KBM-7 (cell line): ENCODE measurements at regions of chr1 and their contacts with region 1.

Region 1: DNA sequence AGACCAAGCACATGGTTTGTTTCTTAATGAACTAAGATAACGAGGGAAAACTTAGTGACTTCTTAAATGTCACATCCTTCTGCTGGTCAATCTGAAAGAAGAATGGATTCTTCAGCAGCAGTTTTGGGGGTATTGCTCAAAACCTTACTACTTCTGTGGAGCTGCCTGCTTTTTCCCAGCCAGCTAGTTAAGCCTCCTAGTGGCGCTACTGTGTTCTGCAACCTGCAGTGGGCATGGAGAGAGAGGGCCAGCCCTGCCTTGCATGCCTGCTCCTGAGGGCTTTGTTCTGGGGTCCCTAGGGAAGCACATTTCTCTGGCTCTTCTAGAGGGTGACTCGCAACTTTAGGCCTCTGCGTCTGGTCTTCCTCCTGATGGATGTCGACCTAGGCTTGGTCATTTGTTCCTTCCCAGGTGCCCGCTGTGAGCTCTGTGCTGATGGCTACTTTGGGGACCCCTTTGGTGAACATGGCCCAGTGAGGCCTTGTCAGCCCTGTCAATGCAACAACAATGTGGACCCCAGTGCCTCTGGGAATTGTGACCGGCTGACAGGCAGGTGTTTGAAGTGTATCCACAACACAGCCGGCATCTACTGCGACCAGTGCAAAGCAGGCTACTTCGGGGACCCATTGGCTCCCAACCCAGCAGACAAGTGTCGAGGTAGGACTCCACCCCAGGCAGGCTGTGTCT is 42.0 kb downstream of the LAMC2 start:
- DNase-seq: peak; percentile 51

Region 2: DNA sequence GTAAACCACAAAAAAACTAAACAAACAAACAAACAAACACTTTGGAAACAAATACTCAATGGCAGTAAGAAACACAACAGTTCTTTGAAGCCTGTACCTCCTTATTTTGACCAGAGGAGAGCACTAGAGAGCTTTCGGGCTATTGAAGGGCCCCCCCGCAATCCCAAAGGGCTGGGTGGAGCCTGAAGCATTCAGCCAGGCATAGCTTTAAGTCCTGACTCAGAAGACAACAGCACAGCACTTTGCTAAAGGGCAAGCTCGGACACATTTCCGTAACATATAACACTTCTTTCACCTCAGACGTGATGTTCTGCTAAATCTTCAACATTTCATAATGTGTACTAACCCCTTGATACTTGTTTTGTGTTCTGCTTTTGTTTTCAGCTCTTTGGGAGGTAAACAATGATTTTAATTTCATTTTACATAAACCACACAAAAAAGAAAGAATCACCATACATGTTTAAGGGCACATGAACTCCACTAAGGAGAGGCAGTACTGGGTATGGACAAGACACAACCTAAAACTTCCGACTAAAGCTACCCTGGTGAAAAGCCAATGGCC is 265.5 kb before region 1 on chr1:
- in situ Hi-C with region 1: loop called (anchors 25 kb)
- DNase-seq: peak; percentile 73

Region 3: DNA sequence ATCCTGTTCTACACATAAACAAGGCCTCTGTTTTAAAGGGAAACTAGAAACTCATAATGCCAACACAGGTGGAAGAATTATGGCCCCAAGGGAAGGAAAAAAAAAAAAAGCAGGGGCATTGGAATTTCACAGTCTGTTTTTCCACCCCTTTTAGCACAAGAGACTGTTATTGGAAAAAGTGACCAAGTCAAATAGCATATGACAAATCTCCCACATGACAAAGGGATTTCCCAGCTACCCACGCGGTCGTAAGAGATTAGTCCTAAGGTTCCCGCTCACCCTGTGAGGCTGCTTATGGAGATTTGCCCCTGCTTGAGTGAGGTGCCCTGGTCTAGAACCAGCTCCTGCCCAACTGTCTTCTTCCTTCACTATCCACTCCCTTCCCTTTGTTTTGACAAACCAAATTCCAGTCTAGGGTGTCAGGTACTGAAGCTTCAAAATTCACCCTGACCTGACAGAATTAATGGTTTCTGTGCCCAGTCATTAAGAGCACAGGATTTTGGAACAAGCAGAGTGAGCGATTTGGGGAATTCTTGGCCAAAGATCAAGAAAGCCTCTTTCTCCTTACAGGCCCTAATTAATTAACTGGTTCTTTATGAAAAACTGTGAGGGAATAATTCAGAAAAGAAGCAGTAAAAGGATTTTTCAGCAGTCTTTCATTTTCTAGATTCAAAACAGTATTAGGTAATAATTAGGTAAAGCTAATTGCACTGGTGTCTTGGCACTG is 82.8 kb after region 1 on chr1:
- in situ Hi-C with region 1: no loop called
- DNase-seq: no peak

Region 4: DNA sequence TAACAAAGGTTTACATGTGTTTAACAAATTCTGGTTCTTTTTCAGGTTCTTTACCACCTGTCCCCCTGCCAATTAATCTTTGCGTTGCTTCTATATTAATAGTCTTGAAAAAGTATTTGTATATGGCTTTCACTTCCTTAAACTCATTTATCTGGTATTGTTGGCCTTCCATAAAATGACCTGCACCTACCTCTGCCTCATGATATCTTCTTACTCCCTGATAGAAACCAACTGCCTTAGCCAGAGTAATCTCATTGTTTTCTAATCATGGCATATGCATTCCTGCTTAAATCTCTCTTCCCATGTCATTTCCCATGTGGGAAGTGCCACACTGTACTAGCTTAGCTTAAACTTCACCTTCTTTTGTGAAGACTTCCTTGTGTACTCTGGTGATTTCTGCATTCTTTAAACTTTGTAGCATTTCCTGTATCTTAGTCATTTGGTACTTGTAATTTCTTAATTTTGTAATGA is 252.9 kb after region 1 on chr1:
- in situ Hi-C with region 1: no loop called
- DNase-seq: no peak